Caco-2 (cell line): ENCODE measurements at regions of chr4 and their contacts with region 1.

Region 1: GRCh38 chr4:67545199-67546003 is at the start of gene CENPC:
- DNase-seq: peak; percentile 95 to 97
- H3K4me3 ChIP-seq: peak within 1 kb of the TSS; percentile 80
- H3K4me3 Mint-ChIP-seq: peak within 1 kb of the TSS; percentile 97
- H3K27ac Mint-ChIP-seq: peak within 1 kb of the TSS; percentile 99
- H3K4me1 ChIP-seq: peaks cover 11% of the 10 kb centered on the region; the same call in 1 of the 2 replicates
- H3K4me1 Mint-ChIP-seq: peaks cover 11% of the 10 kb centered on the region
- H3K27me3 ChIP-seq: no peaks in the 10 kb centered on the region
- H3K27me3 Mint-ChIP-seq: no peaks in the 10 kb centered on the region
- CTCF ChIP-seq: no peak
- total RNA-seq, gene CENPC: 19.5 and 19.7 TPM in 2 replicates

Region 2: GRCh38 chr4:67106861-67107460 is 438.4 kb before region 1 on chr4:
- CTCF ChIA-PET with region 1: no interaction called
- POLR2A ChIA-PET with region 1: no interaction called
- intact Hi-C with region 1: no loop called
- DNase-seq: no peak
- H3K4me3 ChIP-seq: no peak overlapping the region
- H3K4me3 Mint-ChIP-seq: no peak overlapping the region
- H3K27ac Mint-ChIP-seq: no peak overlapping the region
- H3K4me1 ChIP-seq: no peaks in the 10 kb centered on the region
- H3K4me1 Mint-ChIP-seq: no peaks in the 10 kb centered on the region
- H3K27me3 ChIP-seq: no peaks in the 10 kb centered on the region
- H3K27me3 Mint-ChIP-seq: peaks cover 10% of the 10 kb centered on the region
- CTCF ChIP-seq: no peak

Region 3: DNA sequence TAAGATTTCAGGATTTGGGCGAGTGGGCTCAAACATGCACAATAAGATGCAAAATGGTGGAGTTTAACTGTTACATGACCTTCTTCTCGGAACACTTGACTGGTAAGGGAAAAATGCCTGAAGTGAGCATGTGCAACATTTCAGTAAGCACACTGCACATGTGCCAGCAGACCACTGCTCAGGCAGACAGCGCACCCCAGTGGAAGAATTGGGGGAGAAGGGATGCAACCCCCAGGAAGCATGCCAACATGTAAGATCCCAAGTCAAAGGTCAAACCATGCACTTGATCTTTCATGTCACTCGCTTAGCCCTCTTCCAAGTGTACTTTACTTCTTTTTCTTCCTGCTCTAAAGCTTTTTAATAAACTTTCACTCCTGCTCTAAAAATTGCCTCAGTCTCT is 256.4 kb before region 1 on chr4:
- CTCF ChIA-PET with region 1: no interaction called
- POLR2A ChIA-PET with region 1: no interaction called
- intact Hi-C with region 1: no loop called
- DNase-seq: peak in 1 of 2 experiments; percentile 29
- H3K4me3 ChIP-seq: no peak overlapping the region
- H3K4me3 Mint-ChIP-seq: no peak overlapping the region
- H3K27ac Mint-ChIP-seq: no peak overlapping the region
- H3K4me1 ChIP-seq: no peaks in the 10 kb centered on the region
- H3K4me1 Mint-ChIP-seq: no peaks in the 10 kb centered on the region
- H3K27me3 ChIP-seq: no peaks in the 10 kb centered on the region
- H3K27me3 Mint-ChIP-seq: peaks cover 5% of the 10 kb centered on the region
- CTCF ChIP-seq: no peak

Region 4: DNA sequence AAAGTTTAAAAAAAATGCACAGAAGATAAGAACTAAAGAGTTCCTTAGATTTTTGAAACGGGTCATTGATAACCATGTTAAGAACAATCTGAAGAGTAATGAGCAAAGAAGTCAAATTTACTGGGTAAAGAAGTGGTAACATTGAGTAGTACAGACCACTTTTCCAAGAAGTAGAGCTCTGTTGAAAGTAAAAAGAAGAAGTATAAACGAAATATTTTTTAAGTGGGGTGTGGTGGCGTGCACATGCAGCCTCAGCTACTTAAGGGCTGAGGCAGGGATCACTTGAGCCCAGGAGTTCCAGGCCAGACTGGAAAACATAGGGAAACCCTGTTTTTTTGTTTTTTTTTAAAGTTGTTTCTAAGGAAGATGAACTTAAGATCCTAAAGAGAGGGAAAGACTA is 87.1 kb after region 1 on chr4:
- CTCF ChIA-PET with region 1: no interaction called
- POLR2A ChIA-PET with region 1: no interaction called
- intact Hi-C with region 1: loop called (anchors 5 kb)
- DNase-seq: no peak
- H3K4me3 ChIP-seq: no peak overlapping the region
- H3K4me3 Mint-ChIP-seq: no peak overlapping the region
- H3K27ac Mint-ChIP-seq: no peak overlapping the region
- H3K4me1 ChIP-seq: no peaks in the 10 kb centered on the region
- H3K4me1 Mint-ChIP-seq: no peaks in the 10 kb centered on the region
- H3K27me3 ChIP-seq: no peaks in the 10 kb centered on the region
- H3K27me3 Mint-ChIP-seq: no peaks in the 10 kb centered on the region
- CTCF ChIP-seq: no peak

Region 5: GRCh38 chr4:67700738-67701516 is 155.5 kb after region 1 on chr4 and contains the start of gene UBA6:
- CTCF ChIA-PET with region 1: no interaction called
- POLR2A ChIA-PET with region 1: interaction called, 3 read pairs
- intact Hi-C with region 1: loop called (anchors 1 kb)
- DNase-seq: peak; percentile 97 to 98
- H3K4me3 ChIP-seq: peak within 1 kb of the TSS; percentile 60
- H3K4me3 Mint-ChIP-seq: peak within 1 kb of the TSS; percentile 90
- H3K27ac Mint-ChIP-seq: peak within 1 kb of the TSS; percentile 94
- H3K4me1 ChIP-seq: 0 out of 2 replicates have a peak, but pooled peaks cover 4% of the 10 kb centered on the region
- H3K4me1 Mint-ChIP-seq: peaks cover 12% of the 10 kb centered on the region
- H3K27me3 ChIP-seq: no peaks in the 10 kb centered on the region
- H3K27me3 Mint-ChIP-seq: no peaks in the 10 kb centered on the region
- CTCF ChIP-seq: peak in 1 of 2 experiments; percentile 27
- total RNA-seq, gene UBA6: 74.6 and 77.7 TPM in 2 replicates

Region 6: DNA sequence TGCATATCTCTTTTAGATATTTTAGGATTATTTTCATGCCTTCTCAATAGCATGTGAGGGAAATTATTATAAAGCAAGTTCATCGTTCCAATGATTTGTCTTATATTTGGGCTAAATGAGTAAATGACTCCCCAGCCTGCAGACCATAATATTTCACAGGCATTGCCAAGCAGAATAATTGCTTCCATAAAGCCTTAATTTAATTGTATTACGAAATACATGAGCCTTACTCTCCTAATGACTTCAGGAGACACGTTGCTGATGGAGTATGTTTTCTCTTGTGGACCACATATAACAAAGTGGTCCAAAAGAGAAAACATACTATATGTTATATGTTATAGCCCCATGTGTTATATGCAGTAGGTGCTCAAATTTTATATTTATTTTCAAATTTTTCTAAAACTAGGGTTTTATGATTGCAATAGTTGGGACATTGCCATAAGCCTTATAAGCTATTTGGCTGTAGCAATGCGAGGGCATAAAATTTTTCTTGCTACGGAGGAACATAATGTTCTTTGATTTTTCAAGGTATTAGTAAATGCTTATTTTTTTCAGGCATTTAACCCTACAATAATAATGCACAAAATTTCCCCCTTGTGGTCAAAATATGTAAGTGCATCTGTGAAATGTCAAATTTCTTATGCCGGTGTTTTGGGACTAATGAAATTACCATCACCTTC is 364.6 kb after region 1 on chr4:
- CTCF ChIA-PET with region 1: no interaction called
- POLR2A ChIA-PET with region 1: no interaction called
- intact Hi-C with region 1: loop called (anchors 1 kb)
- DNase-seq: no peak
- H3K4me3 ChIP-seq: no peak overlapping the region
- H3K4me3 Mint-ChIP-seq: no peak overlapping the region
- H3K27ac Mint-ChIP-seq: no peak overlapping the region
- H3K4me1 ChIP-seq: peaks cover 9% of the 10 kb centered on the region
- H3K4me1 Mint-ChIP-seq: no peaks in the 10 kb centered on the region
- H3K27me3 ChIP-seq: no peaks in the 10 kb centered on the region
- H3K27me3 Mint-ChIP-seq: no peaks in the 10 kb centered on the region
- CTCF ChIP-seq: peak; percentile 47 to 66